Left colon (tissue), 2 donors: ENCODE measurements at regions of chr15 and their contacts with region 1.

Region 1: DNA sequence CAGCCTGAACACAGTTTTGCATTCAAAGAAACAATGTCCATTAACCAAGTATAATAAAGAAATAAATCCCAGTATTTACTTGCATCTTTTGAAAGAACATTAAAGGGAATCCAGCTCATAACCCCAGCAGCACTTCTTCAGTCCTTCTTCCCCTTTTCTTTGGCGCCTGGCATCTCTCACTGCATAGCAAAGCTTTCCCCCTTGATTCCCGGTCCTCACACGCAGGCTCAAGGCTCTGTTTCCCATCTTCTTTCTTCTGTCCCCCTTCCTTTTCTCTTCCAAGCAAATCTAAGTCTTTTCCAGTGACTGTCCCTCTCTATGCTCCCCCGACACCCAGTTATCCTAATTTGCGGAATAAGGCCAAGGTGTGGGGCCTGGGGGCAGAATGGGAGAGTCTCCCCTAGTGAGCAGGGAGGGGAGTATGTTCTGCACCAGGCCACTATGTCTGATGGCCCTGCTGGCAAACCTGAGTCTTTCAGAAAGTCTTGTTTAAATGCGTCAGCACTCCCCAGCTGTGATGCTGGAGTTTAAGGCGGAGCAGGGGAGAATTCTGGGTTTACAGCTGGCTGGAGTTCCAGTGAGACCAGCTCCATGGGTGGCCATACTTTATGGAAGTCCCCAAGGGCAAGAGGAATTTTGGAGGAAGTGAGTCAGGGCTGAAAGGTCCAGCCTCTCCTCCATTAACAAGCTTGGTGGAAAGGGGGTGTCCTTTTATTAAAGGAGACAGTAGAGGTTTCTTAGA is 42.1 kb downstream of the GOLGA6A start:
- DNase-seq: no peak
- ATAC-seq: no peak

Region 2: GRCh38 chr15:73856458-73857192 is 183.7 kb before region 1 on chr15:
- intact Hi-C with region 1: no loop called
- DNase-seq: no peak
- ATAC-seq: no peak

Region 3: GRCh38 chr15:73908030-73908821 is 132.1 kb before region 1 on chr15:
- intact Hi-C with region 1: no loop called
- DNase-seq: peak; percentile 51 to 86
- ATAC-seq: peak; percentile 93

Region 4: GRCh38 chr15:73979636-73980035 is 60.6 kb before region 1 on chr15:
- intact Hi-C with region 1: loop called in 1 of 2 experiments (anchors 5 kb)
- DNase-seq: no peak
- ATAC-seq: no peak